WTC11 (cell line): ENCODE measurements at regions of chr6 and their contacts with region 1.

Region 1: DNA sequence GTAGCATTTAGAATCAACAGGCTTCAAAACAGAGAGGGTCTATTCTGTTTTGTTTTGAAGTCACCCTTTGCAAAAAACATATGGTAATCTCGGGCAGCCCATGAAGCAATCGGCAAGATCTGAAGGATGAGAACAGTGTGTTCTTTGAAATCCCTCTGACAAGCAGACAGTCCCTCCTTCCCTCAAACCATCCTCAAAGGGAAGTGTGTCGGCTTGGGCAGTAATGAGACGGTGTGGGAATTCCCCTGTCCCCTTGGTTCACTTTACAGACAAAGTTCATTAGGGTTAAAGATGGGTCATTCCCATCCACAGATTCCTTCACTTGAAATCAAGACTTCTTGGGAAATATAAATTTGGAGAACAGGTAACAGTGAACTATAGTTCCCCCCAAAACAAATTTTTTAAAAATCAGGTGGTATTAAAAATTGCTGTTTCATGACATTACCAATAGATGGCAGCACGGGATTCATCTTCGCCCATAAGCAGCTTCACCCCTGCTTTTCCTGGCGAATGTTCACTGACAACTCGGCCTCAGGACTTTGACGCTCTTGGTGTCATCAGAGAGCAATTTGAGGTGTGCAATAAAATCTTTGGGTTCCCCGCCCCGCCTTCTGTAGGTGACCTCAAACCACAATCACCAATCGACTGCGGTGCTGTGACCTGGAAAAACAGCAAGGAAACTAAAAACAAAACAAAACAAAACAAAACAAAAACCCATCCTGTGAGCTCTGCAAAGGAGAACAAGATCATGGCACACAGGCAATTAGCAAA is 159.3 kb upstream of the TNFAIP3 start:
- DNase-seq: peak; percentile 34
- ATAC-seq: peak; percentile 33; the same call in 1 of the 2 replicates
- H3K4me3 Mint-ChIP-seq: no peak overlapping the region
- H3K27ac Mint-ChIP-seq: no peak overlapping the region
- H3K4me1 Mint-ChIP-seq: peaks cover 6% of the 10 kb centered on the region
- H3K27me3 Mint-ChIP-seq: no peaks in the 10 kb centered on the region; the same call in 1 of the 2 replicates
- CTCF ChIP-seq: no peak; the same call in 1 of the 2 replicates

Region 2: GRCh38 chr6:137637121-137637520 is 70.7 kb before region 1 on chr6:
- CTCF ChIA-PET with region 1: no interaction called
- POLR2A ChIA-PET with region 1: no interaction called
- DNase-seq: no peak
- ATAC-seq: no peak
- H3K4me3 Mint-ChIP-seq: no peak overlapping the region
- H3K27ac Mint-ChIP-seq: no peak overlapping the region
- H3K4me1 Mint-ChIP-seq: no peaks in the 10 kb centered on the region
- H3K27me3 Mint-ChIP-seq: no peaks in the 10 kb centered on the region
- CTCF ChIP-seq: no peak

Region 3: DNA sequence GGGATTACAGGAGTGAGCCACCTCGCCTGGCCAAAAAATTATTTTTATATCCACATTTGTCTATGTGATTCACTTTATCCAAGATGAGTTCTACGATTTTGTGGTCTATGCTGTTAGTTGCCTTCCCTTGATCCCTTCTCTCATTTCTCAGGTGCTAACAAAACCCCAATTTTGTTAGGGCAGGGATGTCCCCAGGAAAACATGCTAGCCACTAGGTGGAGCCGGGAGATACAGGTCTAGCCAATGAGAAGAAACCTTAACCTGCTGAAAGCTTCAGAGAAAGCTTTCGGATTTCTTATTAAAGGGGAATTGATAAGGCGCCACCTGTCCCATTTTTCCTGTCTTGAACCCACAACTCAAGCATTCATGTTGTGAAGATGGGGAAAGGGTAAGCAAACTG is 46.2 kb before region 1 on chr6:
- CTCF ChIA-PET with region 1: no interaction called
- POLR2A ChIA-PET with region 1: no interaction called
- DNase-seq: peak; percentile 63
- ATAC-seq: peak; percentile 81
- H3K4me3 Mint-ChIP-seq: no peak overlapping the region
- H3K27ac Mint-ChIP-seq: no peak overlapping the region
- H3K4me1 Mint-ChIP-seq: no peaks in the 10 kb centered on the region
- H3K27me3 Mint-ChIP-seq: no peaks in the 10 kb centered on the region
- CTCF ChIP-seq: no peak

Region 4: DNA sequence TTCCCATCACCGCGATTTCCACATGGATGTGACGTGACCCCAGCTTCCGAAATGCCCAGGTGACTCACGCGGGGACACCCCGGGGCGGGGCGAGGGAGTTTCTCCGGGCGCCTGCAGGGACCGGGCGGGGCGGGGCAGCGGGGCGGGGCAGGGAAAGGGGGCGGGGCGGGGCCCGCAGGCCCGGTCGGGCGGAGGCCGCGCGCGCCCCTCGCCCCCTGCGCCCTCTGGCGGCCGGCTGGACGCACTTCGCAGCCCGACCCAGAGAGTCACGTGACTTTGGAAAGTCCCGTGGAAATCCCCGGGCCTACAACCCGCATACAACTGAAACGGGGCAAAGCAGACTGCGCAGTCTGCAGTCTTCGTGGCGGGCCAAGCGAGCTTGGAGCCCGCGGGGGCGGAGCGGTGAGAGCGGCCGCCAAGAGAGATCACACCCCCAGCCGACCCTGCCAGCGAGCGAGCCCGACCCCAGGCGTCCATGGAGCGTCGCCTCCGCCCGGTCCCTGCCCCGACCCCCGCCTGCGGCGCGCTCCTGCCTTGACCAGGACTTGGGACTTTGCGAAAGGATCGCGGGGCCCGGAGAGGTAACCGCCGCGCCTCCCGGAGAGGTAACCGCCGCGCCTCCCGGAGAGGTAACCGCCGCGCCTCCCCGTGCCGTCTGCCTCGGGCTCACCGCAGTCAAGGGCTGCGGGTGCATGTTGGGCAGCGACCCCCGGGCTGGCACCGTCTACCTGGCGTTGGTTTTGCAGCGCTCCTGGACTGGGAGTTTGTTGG is 159.3 kb after region 1 on chr6 and contains the start of gene TNFAIP3:
- CTCF ChIA-PET with region 1: interaction called, 10 read pairs
- POLR2A ChIA-PET with region 1: no interaction called
- DNase-seq: peak; percentile 77
- ATAC-seq: peak; percentile 72
- H3K4me3 Mint-ChIP-seq: peak within 1 kb of the TSS; percentile 87
- H3K27ac Mint-ChIP-seq: 0 out of 2 replicates have a peak within 1 kb of the TSS, but pooled peaks have one; percentile 58
- H3K4me1 Mint-ChIP-seq: peaks cover 44% of the 10 kb centered on the region
- H3K27me3 Mint-ChIP-seq: peaks cover 31% of the 10 kb centered on the region
- CTCF ChIP-seq: peak; percentile 85
- total RNA-seq, gene TNFAIP3: 3.0 to 4.7 TPM (median 4.2 TPM) in 3 replicates

Region 5: GRCh38 chr6:137926207-137926731 is 218.5 kb after region 1 on chr6:
- CTCF ChIA-PET with region 1: interaction called, 13 read pairs
- POLR2A ChIA-PET with region 1: no interaction called
- DNase-seq: peak; percentile 56
- ATAC-seq: peak; percentile 73
- H3K4me3 Mint-ChIP-seq: peak overlapping the region; percentile 31
- H3K27ac Mint-ChIP-seq: no peak overlapping the region
- H3K4me1 Mint-ChIP-seq: peaks cover 36% of the 10 kb centered on the region
- H3K27me3 Mint-ChIP-seq: peaks cover 14% of the 10 kb centered on the region
- CTCF ChIP-seq: no peak

Region 6: GRCh38 chr6:137938770-137939379 is 231.1 kb after region 1 on chr6:
- CTCF ChIA-PET with region 1: interaction called, 18 read pairs
- POLR2A ChIA-PET with region 1: interaction called, 4 read pairs
- DNase-seq: no peak
- ATAC-seq: no peak
- H3K4me3 Mint-ChIP-seq: no peak overlapping the region
- H3K27ac Mint-ChIP-seq: no peak overlapping the region
- H3K4me1 Mint-ChIP-seq: no peaks in the 10 kb centered on the region
- H3K27me3 Mint-ChIP-seq: no peaks in the 10 kb centered on the region
- CTCF ChIP-seq: no peak

Region 7: DNA sequence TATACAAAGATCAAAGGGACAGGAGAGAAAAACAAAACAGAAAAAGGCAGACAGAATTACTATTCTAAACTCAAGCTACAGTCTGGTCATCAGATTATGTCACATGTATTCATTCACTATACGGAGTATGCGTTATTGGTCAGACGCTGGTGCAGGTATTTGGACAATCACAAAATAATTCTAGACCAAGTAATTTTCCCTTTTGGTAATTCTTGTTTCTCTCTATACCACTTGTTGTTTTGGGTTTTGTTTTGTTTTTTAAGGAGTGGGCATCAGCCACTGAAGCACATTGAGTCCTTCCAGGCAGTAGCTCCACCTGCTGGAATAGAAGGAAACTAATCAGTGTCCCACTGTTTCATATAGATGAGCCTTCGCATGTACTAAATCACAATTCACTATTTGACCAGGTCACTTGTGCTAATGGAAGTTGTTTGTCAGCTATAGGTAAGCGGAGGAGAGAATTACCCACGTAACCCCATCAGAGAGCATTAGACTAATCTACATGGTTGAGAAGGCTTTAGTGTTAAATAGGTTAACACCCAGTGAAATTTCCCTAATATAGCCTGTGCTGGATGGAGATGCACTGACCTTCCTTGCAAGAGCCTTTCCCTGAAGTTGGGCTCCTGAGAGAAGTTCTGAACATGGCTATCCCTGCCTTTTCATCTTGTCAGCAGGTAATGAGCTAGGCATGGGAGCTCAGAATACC is 237.2 kb after region 1 on chr6:
- CTCF ChIA-PET with region 1: interaction called, 18 read pairs
- POLR2A ChIA-PET with region 1: interaction called, 4 read pairs
- DNase-seq: no peak
- ATAC-seq: peak; percentile 84
- H3K4me3 Mint-ChIP-seq: no peak overlapping the region
- H3K27ac Mint-ChIP-seq: no peak overlapping the region
- H3K4me1 Mint-ChIP-seq: peaks cover 2% of the 10 kb centered on the region
- H3K27me3 Mint-ChIP-seq: no peaks in the 10 kb centered on the region; the same call in 1 of the 2 replicates
- CTCF ChIP-seq: peak; percentile 49

Region 8: DNA sequence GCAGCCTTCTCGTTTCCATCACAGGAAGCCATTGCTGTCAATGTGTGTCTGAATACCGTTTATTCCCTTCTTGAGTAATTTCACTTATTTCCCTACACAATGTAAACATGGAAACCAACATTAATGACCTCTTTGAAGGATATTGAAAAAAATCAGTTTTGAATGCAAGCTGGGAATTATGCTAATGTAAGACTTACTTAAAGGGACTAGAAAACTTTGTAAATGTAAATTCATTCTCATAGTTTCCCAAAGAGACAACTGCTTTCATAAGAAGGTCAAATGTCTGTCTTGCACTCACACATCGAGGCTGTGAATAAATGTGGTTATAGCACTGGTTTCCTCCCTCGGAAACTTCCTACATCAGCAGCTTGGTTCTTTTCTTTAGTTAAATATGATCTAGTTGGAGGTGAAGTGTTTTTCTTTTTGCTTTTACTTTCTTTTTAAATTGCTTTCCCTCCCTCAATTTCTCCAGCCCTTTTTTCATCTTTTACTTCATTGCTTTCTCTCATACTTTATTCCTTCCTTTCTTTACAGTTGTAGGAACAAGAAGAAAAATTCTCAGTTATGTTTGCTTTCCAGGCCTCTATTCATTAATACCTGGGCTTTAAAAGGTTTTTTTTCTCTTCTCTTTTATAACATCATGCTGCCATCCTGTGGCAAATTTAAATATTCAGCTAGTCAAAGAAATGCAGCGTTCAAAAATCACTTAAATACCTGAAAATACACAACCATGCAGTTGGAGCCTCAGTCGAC is 267.6 kb after region 1 on chr6:
- CTCF ChIA-PET with region 1: interaction called, 10 read pairs
- POLR2A ChIA-PET with region 1: no interaction called
- DNase-seq: no peak
- ATAC-seq: no peak
- H3K4me3 Mint-ChIP-seq: no peak overlapping the region
- H3K27ac Mint-ChIP-seq: no peak overlapping the region
- H3K4me1 Mint-ChIP-seq: peaks cover 13% of the 10 kb centered on the region
- H3K27me3 Mint-ChIP-seq: no peaks in the 10 kb centered on the region
- CTCF ChIP-seq: no peak

Region 9: DNA sequence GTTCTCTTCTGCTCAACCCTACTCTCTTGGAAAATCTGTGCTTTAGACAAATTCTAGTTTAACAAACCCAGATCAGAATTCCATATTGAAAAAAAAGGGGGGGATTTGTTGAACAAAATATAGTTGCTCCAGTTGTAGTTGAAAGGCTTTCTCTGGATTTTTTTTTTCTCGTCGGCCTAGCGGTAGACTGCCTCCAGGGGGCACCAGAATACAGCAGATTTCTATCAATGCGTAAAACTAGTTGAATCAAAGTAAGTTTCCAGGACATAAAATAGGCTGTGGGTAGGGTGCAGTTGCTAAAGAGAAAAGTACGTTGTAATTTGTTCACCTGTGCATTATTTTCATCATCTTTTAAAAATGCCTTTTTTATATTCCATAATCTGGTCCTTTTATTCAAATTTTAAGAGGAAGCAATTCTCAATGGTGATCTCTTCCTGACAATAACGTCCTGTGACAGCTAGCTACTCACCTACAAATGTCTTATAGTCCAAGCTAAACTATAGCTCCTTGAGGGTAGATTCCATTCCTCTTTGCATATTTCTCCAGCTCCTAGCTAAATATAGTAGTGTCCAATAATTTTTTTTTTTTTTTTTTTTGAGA is 294.1 kb after region 1 on chr6:
- CTCF ChIA-PET with region 1: interaction called, 11 read pairs
- POLR2A ChIA-PET with region 1: no interaction called
- DNase-seq: peak; percentile 63
- ATAC-seq: 0 out of 2 replicates have a peak, but pooled peaks have one; percentile 36
- H3K4me3 Mint-ChIP-seq: no peak overlapping the region
- H3K27ac Mint-ChIP-seq: no peak overlapping the region
- H3K4me1 Mint-ChIP-seq: peaks cover 19% of the 10 kb centered on the region
- H3K27me3 Mint-ChIP-seq: no peaks in the 10 kb centered on the region
- CTCF ChIP-seq: peak; percentile 65